ENCODE measurements at regions of chr13 and their contacts with region 1.

Region 1: GRCh38 chr13:93775507-93776108 is 549.0 kb downstream of the GPC6 start:
- DNase-seq: peak; percentile 74
- ATAC-seq: peak; percentile 40
- H3K4me3 ChIP-seq: peak overlapping the region; percentile 51
- H3K27ac ChIP-seq: peak overlapping the region; percentile 86
- H3K4me1 ChIP-seq: peaks cover 56% of the 10 kb centered on the region
- H3K27me3 ChIP-seq: no peaks in the 10 kb centered on the region
- CTCF ChIP-seq: no peak

Region 2: DNA sequence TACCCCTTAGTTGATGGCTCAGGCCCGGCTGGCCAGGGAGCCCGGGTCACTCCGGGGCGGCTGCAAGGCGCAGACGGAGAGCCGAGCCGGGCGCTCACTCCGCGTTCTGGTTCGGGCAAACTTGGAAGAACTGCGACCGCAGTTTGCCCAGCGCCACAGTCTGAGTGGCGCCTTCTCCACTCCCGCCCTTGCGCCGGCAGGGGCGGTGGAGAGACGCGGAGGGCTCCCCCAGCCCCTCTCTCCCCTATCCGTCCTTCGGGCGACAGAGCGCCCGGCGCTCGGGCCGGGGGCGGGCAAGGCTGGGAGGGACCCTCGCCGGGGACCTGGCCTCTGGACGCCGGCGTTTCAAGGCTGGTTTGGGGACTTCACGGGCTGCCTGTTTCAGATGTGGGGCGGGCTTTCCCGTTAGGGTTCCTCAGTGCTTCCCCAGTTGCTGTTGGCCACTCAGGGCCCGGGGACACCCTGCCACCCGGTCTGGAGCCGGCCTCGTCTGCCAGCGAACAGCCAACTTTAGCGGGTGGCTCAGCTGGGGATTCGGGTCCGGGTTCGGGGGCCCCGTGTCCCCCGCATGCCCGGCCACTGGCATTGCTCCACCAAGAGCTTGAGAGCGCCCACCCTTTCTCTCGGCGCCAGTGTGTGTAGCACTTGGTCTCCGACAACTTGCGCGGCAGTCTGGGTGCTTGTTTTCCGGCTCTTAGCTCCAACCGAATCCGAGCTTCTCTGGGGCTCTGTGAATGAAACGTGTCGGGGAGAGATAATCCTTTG is 547.5 kb before region 1 on chr13:
- CTCF ChIA-PET with region 1: no interaction called
- POLR2A ChIA-PET with region 1: no interaction called
- intact Hi-C with region 1: loop called (anchors 5 kb)
- DNase-seq: peak; percentile 64
- ATAC-seq: peak; percentile 65
- H3K4me3 ChIP-seq: peak overlapping the region; percentile 88
- H3K27ac ChIP-seq: no peak overlapping the region
- H3K4me1 ChIP-seq: peaks cover 43% of the 10 kb centered on the region
- H3K27me3 ChIP-seq: no peaks in the 10 kb centered on the region
- CTCF ChIP-seq: peak; percentile 37; the same call in 1 of the 2 replicates

Region 3: DNA sequence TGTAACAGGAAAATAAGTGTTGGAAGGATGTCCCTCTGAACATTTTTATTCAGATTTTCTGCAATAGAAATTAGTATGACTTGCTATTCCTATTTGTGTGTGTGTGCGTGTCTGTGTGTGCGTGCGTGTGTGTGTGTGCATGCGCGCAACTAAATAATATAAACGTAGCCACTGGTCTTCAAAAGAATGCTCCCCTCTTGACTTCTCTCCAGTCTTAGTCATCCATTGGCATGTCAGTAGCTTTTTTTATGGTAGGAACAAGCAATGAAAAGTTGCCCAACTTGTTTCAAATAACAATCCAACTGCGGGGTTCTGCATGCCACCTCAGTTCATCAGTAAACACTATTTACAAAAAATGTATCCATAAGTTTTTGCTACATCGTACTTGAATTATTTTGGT is 299.4 kb before region 1 on chr13:
- CTCF ChIA-PET with region 1: no interaction called
- POLR2A ChIA-PET with region 1: no interaction called
- intact Hi-C with region 1: loop called (anchors 5 kb)
- DNase-seq: peak; percentile 82
- ATAC-seq: peak; percentile 48
- H3K4me3 ChIP-seq: peak overlapping the region; percentile 44; the same call in 1 of the 2 replicates
- H3K27ac ChIP-seq: peak overlapping the region; percentile 32; the same call in 1 of the 2 replicates
- H3K4me1 ChIP-seq: peaks cover 29% of the 10 kb centered on the region
- H3K27me3 ChIP-seq: no peaks in the 10 kb centered on the region
- CTCF ChIP-seq: no peak

Region 4: DNA sequence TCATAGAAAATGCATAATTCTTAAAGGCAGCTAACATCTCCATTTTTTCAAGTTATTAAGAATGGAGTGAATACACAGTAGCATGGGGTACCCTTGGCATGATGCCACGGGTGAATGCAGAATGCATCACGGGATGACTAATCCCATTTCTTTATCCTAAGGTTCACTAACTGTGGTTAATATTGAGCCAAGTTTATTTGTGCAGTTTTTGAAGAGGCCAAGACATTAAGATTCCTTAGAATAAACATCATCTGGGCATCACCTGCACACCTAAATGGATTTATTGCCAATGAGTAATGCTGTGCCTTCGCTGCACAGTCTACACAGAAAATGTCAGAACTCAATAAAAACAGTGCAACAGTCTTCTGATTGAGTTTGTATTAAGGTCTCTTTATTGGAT is 215.9 kb before region 1 on chr13:
- CTCF ChIA-PET with region 1: no interaction called
- POLR2A ChIA-PET with region 1: no interaction called
- intact Hi-C with region 1: loop called (anchors 2 kb)
- DNase-seq: peak; percentile 94
- ATAC-seq: peak; percentile 98
- H3K4me3 ChIP-seq: no peak overlapping the region
- H3K27ac ChIP-seq: peak overlapping the region; percentile 69
- H3K4me1 ChIP-seq: peaks cover 18% of the 10 kb centered on the region
- H3K27me3 ChIP-seq: no peaks in the 10 kb centered on the region
- CTCF ChIP-seq: no peak

Region 5: DNA sequence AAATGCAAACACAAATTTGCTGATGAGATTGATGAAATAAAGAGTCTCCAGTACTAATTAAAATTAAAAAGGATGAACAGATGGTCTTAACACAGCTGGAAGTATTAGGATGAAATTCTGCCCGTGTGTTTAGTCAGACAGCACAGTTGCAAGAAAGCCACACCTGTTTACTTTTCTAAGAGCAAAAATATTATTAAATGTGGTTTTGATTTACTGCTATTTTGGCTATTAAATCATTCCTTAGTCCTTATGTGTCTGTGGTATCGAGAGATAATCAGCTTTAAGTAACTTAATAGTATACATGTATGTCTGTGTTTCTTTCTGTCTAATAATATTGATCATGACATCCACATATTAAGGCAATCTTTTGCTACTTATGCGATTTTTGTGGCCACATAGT is 54.1 kb before region 1 on chr13:
- CTCF ChIA-PET with region 1: no interaction called
- POLR2A ChIA-PET with region 1: no interaction called
- intact Hi-C with region 1: loop called (anchors 2 kb)
- DNase-seq: peak; percentile 59
- ATAC-seq: peak; percentile 85
- H3K4me3 ChIP-seq: no peak overlapping the region
- H3K27ac ChIP-seq: no peak overlapping the region
- H3K4me1 ChIP-seq: peaks cover 15% of the 10 kb centered on the region
- H3K27me3 ChIP-seq: no peaks in the 10 kb centered on the region
- CTCF ChIP-seq: no peak

Region 6: DNA sequence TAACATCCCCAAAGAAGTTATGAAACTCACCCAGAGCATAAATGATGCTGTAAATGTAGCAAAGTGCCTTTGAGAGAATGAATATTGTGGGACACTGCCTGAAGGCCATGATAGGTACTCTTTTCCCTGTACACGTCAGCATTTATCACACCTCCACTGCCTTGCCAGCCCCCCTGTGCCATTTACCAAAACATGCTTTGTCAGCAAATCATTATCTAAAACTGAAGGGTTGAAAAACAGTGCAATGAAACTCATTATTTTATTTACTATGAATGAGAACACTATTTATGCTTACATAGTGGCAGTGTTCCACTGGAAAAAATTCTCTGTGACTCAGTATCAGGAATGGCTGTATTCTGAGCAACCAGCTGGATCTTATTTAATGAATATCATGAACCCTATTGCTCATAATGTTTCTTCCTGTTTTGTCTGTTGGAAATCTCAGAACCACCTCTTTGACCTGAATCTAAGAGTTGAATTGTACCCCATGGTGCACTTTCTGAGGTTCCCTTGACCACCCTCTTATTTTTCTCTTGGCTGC is 139.7 kb after region 1 on chr13:
- CTCF ChIA-PET with region 1: no interaction called
- POLR2A ChIA-PET with region 1: no interaction called
- intact Hi-C with region 1: no loop called
- DNase-seq: no peak
- ATAC-seq: no peak
- H3K4me3 ChIP-seq: no peak overlapping the region
- H3K27ac ChIP-seq: no peak overlapping the region
- H3K4me1 ChIP-seq: no peaks in the 10 kb centered on the region
- H3K27me3 ChIP-seq: no peaks in the 10 kb centered on the region
- CTCF ChIP-seq: no peak